Stomach (tissue), 19 donors: ENCODE measurements at regions of chrX and their contacts with region 1.

Region 1: DNA sequence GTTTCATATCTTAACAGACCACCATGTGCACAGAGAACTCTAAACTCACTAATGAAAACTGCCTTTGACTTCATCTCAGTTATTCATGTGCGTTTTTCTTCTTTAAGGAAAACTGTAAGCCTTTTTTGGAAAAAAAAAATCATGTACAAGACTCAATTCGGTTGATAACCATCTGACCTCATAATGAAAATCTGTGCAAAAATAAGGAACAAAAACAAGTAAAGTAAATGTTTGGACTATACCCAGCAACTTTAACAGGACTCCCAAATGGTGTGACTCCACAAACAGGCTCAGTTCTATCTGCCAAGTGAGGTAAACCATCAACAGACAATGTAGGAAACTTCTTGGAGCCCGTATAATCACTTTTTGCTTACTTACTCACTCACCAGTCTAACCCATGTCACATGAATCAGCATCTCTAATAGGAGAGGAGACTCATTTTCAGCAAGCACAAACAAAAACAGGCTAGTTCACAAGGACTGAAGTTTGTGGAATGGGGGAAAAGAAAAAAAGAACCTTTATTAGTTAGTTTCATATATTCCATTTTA is 9.3 kb downstream of the APOO start:
- DNase-seq: no peak
- H3K4me3 ChIP-seq: no peak overlapping the region
- H3K27ac ChIP-seq: peak overlapping the region in 3 of 5 donors; percentile 31 to 40 (median 35)
- H3K4me1 ChIP-seq: peaks cover 0 to 52% (median 17%) of the 10 kb centered on the region in 4 donors
- H3K27me3 ChIP-seq: peaks cover 0 to 3% (median 3%) of the 10 kb centered on the region in 3 donors
- CTCF ChIP-seq: no peak
- EP300 ChIP-seq: no peak
- POLR2A ChIP-seq: no peak

Region 2: GRCh38 chrX:23773601-23774175 is 124.8 kb before region 1 on chrX:
- intact Hi-C with region 1: loop called (anchors 10 kb)
- DNase-seq: peak in 1 of 2 donors; percentile 61
- H3K4me3 ChIP-seq: no peak overlapping the region
- H3K27ac ChIP-seq: peak overlapping the region in 4 of 5 donors; percentile 49 to 71 (median 56)
- H3K4me1 ChIP-seq: peaks cover 0 to 5% (median 0%) of the 10 kb centered on the region in 4 donors
- H3K27me3 ChIP-seq: no peaks in the 10 kb centered on the region
- CTCF ChIP-seq: no peak
- EP300 ChIP-seq: no peak
- POLR2A ChIP-seq: no peak

Region 3: GRCh38 chrX:24034485-24034884 is 136.0 kb after region 1 on chrX:
- intact Hi-C with region 1: no loop called
- DNase-seq: no peak
- H3K4me3 ChIP-seq: no peak overlapping the region
- H3K27ac ChIP-seq: no peak overlapping the region
- H3K4me1 ChIP-seq: no peaks in the 10 kb centered on the region
- H3K27me3 ChIP-seq: no peaks in the 10 kb centered on the region
- CTCF ChIP-seq: no peak
- EP300 ChIP-seq: no peak
- POLR2A ChIP-seq: no peak